SK-N-SH (cell line): ENCODE measurements at regions of chr16 and their contacts with region 1.

Region 1: GRCh38 chr16:11396241-11397048 is 51.2 kb downstream of the RMI2 start:
- DNase-seq: peak; percentile 97
- H3K4me3 ChIP-seq: no peak overlapping the region
- H3K27ac ChIP-seq: peak overlapping the region in 1 of 2 experiments; percentile 25; a peak in 1 of 4 replicates
- H3K4me1 ChIP-seq: peaks cover 0 to 12% of the 10 kb centered on the region in 2 experiments; a peak in 1 of 4 replicates
- H3K27me3 ChIP-seq: no peaks in the 10 kb centered on the region
- CTCF ChIP-seq: peak; percentile 94
- EP300 ChIP-seq: no peak
- RAD21 ChIP-seq: peak; percentile 98

Region 2: DNA sequence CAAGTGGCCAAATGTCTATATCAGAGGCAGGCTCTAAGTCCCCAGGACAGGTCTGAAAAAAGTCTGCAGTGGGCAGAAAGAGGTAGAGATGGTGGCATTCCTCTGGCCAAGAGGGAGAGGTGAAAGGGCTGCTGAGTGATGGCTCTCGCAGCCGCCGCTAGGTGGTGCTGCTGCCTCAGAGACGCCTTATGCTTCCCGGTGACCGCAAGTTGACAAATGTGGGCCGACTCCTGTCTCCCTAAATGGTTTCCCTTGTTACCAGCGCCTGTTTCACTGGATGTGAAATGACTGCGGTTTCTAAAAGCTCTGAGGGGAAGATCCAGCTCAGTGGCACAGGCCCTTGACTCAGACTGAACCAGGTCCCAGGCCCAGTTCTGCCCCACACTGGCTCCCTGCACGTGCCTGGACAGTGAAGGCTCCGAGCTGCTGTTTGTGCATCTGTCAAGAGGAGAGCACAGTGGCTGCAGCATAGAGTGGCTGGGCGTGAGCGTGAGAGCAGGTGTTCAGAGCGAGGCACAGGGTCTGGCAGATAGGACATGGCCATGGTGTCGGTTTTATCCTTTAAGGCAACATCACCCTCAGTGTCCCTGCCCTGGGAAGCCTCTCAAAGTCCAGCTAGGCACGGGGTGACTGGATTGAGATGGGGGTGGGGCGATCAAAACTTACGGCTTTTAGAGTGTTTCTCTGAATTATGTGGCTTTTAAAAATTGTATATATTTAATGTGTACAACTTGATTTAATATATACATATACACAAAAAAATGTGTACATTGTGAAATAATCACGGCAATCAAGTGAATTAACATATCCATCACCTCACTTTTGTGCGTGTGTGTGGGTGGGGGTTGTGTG is 432.2 kb before region 1 on chr16:
- CTCF ChIA-PET with region 1: interaction called, 23 read pairs
- POLR2A ChIA-PET with region 1: no interaction called
- DNase-seq: peak; percentile 79
- H3K4me3 ChIP-seq: peak overlapping the region in 1 of 2 experiments; percentile 30; a peak in 1 of 4 replicates
- H3K27ac ChIP-seq: peak overlapping the region in 1 of 2 experiments; percentile 29; a peak in 1 of 4 replicates
- H3K4me1 ChIP-seq: peaks cover 13 to 25% of the 10 kb centered on the region in 2 experiments
- H3K27me3 ChIP-seq: no peaks in the 10 kb centered on the region
- CTCF ChIP-seq: peak; percentile 92
- EP300 ChIP-seq: no peak
- RAD21 ChIP-seq: peak; percentile 94

Region 3: GRCh38 chr16:11345040-11345862 is 51.2 kb before region 1 on chr16 and contains the start of gene RMI2:
- CTCF ChIA-PET with region 1: no interaction called
- POLR2A ChIA-PET with region 1: no interaction called
- DNase-seq: peak; percentile 99
- H3K4me3 ChIP-seq: peak within 1 kb of the TSS; percentile 58 to 70
- H3K27ac ChIP-seq: no peak within 1 kb of the TSS
- H3K4me1 ChIP-seq: peaks cover 8 to 16% of the 10 kb centered on the region in 2 experiments; a peak in 2 of 4 replicates
- H3K27me3 ChIP-seq: no peaks in the 10 kb centered on the region
- CTCF ChIP-seq: no peak
- EP300 ChIP-seq: no peak
- RAD21 ChIP-seq: no peak
- polyA plus RNA-seq, gene RMI2: 5.6 and 8.5 TPM in 2 replicates

Region 4: DNA sequence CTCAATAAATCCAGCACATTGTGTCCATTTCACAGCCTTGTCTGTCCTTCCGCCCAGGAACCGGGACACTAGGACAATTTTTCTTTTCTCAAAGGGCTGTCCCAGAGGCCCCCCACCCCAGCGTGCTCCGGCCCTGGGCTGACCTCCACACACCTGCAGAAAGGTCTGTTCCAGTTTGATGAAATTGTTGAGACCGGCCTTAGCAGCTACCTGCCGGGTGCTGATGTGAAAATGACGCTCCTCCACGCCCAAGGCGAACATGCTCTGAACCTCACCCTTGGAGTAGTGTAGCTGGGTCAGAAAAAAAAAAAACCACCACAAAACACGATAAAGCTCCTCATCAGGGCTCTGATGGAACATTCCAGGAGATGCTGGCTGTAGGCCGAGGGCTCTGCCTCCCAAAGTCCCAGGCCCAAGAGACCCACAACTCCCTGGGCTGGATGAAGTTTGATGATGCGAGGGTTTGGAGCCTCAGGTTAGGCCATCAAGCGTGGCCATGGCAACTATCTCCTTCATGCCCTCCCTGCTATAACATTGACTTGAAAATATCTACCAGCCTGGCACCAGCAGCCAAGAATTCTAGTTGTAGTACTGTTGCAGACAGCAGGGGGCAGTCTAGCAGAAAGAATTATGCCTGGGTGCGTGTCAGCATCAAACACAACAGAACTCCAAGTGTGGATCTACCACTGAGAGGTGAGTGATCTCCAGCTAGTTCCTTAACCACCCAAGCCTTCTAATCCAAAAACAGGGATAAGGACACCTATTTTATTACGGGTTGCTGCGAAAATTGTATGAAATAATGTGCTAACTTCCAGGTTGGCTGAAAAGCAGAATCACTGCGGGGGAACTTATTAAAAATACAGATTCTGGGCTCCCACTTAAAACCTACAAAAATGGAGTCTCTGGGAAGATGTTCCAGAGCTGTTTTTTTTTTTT is 10.9 kb after region 1 on chr16:
- CTCF ChIA-PET with region 1: interaction called, 107 read pairs
- POLR2A ChIA-PET with region 1: no interaction called
- DNase-seq: peak; percentile 75
- H3K4me3 ChIP-seq: no peak overlapping the region; a peak in 1 of 4 replicates
- H3K27ac ChIP-seq: no peak overlapping the region
- H3K4me1 ChIP-seq: peaks cover 17 to 36% of the 10 kb centered on the region in 2 experiments
- H3K27me3 ChIP-seq: no peaks in the 10 kb centered on the region
- CTCF ChIP-seq: peak; percentile 63
- EP300 ChIP-seq: no peak
- RAD21 ChIP-seq: peak; percentile 82

Region 5: DNA sequence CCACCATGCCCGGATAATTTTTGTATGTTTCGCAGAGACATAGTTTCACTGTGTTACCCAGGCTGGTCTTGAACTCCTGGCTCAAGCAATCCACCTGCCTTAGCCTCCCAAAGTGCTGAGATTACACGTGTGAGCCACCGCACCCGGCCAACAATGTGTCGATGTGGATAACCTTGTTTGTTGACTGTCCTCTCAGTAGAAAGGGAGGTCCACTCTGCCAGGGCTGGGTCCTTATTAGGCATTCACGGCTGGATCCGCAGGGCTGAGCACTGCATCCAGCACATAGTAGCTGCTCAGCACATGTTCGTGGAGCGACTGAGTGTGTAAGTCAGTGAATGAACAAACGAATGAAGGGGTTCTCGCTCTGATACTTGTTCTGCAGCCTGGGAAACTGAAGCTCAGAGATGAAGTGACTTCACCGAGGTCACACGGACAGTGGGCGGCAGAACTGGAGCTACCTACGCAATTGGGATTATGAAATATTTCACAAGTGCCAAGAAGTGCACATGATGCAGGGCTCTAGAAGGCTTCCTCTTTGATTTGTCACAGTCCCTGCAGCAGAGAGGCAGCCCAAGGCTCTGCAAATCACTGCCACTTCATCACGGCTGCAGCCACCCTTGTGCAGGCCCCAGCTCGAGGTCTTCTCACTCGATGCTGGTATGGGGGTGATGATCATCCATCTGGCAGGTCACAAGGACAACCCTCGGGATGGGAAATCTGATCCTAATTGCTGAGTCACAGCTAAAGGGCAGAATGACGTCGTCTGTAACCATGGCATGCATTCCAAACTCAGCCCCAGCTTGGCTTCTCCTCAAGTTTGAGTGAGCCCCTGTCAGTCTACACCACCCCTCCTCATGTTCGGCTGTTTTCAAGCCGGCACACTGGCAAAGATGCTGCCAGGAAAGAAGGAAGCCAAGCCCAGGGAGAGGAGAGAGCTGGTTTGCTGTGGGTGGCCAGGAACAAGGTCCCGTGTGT is 243.8 kb after region 1 on chr16:
- CTCF ChIA-PET with region 1: interaction called, 20 read pairs
- POLR2A ChIA-PET with region 1: no interaction called
- DNase-seq: no peak
- H3K4me3 ChIP-seq: no peak overlapping the region
- H3K27ac ChIP-seq: peak overlapping the region in 1 of 2 experiments; percentile 89; a peak in 2 of 4 replicates
- H3K4me1 ChIP-seq: peaks cover 8 to 10% of the 10 kb centered on the region in 2 experiments; a peak in 3 of 4 replicates
- H3K27me3 ChIP-seq: no peaks in the 10 kb centered on the region
- CTCF ChIP-seq: no peak
- EP300 ChIP-seq: no peak; a peak in 1 of 4 replicates
- RAD21 ChIP-seq: no peak

Region 6: DNA sequence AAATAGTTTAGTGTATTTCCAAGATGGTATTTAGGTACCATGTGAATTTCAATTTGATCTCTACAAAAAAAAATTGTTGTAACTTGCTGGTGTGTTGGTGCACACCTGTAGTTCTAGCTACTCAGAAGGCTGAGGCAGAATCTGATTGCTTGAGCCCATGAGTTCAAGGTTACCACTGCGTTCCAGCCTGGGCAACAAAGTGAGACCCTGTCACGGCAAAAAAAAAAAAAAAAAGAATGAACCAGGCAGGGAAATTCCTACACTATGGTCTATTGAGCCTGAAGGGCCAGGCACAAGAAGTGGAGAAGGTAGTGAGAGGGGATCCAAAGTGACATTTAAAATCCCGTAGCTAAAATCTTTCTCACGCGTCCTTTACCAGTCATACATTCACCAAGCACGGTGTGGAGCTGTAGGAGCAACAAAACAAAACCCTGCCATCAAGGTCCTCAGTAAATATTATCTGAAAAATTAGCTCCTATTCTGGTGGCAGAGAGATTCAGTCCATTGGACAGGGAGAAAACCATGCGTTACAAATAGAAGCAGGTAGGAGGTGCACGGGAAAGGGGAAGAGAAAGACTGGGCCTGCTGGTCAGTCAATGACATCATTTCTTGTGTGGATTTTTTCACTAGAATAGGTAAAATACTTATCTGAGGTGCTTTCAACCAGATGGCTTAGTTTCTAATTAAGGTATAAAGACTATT is 319.0 kb after region 1 on chr16:
- CTCF ChIA-PET with region 1: interaction called, 103 read pairs
- POLR2A ChIA-PET with region 1: no interaction called
- DNase-seq: no peak
- H3K4me3 ChIP-seq: no peak overlapping the region
- H3K27ac ChIP-seq: no peak overlapping the region
- H3K4me1 ChIP-seq: peaks cover 0 to 4% of the 10 kb centered on the region in 2 experiments; a peak in 1 of 4 replicates
- H3K27me3 ChIP-seq: no peaks in the 10 kb centered on the region
- CTCF ChIP-seq: no peak
- EP300 ChIP-seq: no peak
- RAD21 ChIP-seq: no peak